HepG2 (cell line): ENCODE measurements at regions of chr6 and their contacts with region 1.

Region 1: DNA sequence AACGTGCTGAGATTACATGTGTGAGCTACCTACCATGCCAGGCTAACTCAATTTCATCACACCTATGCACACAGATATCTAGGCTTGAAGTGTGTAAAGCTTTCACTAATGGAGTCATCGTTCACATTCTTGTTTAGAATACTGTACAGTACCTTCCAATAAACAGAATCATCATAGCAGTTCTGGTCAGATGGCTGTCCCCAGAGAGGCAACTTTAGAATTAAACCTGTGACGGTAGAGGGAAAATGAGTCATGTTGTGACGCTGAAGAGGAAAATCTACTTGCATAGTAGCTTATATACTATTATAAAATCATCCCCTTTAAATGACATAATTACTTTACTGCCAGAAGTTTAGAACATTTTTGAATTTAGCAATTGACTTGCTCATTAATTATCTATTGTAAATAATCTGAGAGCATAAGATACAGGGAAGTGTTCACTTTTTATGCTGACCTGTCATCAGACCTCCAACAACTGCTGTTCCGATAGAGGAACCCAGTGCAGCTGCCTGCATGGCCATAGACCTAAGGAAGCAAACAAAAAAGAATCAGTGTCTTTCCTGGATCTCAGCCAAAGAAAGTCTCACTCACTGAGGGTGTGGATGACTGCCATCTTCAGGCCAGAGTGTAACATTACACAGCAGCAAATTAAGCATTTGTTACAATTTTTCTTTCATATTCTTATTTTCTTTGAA is 29.8 kb downstream of the RHAG start:
- DNase-seq: peak; percentile 91
- ATAC-seq: peak; percentile 88
- H3K4me3 ChIP-seq: no peak overlapping the region
- H3K27ac ChIP-seq: no peak overlapping the region
- H3K4me1 ChIP-seq: 0 out of 2 replicates have a peak, but pooled peaks cover 5% of the 10 kb centered on the region
- H3K27me3 ChIP-seq: 0 out of 5 replicates have a peak, but pooled peaks cover 0 to 5% of the 10 kb centered on the region in 2 experiments
- CTCF ChIP-seq: peak; percentile 94
- EP300 ChIP-seq: no peak
- POLR2A ChIP-seq: no peak
- RAD21 ChIP-seq: peak; percentile 71; the same call in 1 of the 2 replicates

Region 2: GRCh38 chr6:49453221-49453620 is 153.6 kb before region 1 on chr6:
- CTCF ChIA-PET with region 1: interaction called, 11 read pairs
- POLR2A ChIA-PET with region 1: no interaction called
- in situ Hi-C with region 1: loop called (anchors 5 kb)
- intact Hi-C with region 1: loop called (anchors 1 kb)
- DNase-seq: peak; percentile 6
- ATAC-seq: peak; percentile 60; the same call in 2 of the 3 replicates
- H3K4me3 ChIP-seq: no peak overlapping the region
- H3K27ac ChIP-seq: no peak overlapping the region
- H3K4me1 ChIP-seq: no peaks in the 10 kb centered on the region
- H3K27me3 ChIP-seq: no peaks in the 10 kb centered on the region
- CTCF ChIP-seq: peak; percentile 21; the same call in 1 of the 2 replicates
- EP300 ChIP-seq: no peak
- POLR2A ChIP-seq: no peak
- RAD21 ChIP-seq: no peak

Region 3: GRCh38 chr6:49531774-49532569 is 74.9 kb before region 1 on chr6:
- CTCF ChIA-PET with region 1: interaction called, 103 read pairs
- POLR2A ChIA-PET with region 1: no interaction called
- in situ Hi-C with region 1: loop called (anchors 5 kb)
- intact Hi-C with region 1: loop called (anchors 1 kb)
- DNase-seq: peak; percentile 72
- ATAC-seq: peak; percentile 98
- H3K4me3 ChIP-seq: peak overlapping the region; percentile 24 to 41 (median 40)
- H3K27ac ChIP-seq: no peak overlapping the region
- H3K4me1 ChIP-seq: peaks cover 16% of the 10 kb centered on the region
- H3K27me3 ChIP-seq: no peaks in the 10 kb centered on the region
- CTCF ChIP-seq: peak; percentile 83
- EP300 ChIP-seq: peak in 1 of 2 experiments; percentile 3; a peak in 1 of 4 replicates
- POLR2A ChIP-seq: no peak
- RAD21 ChIP-seq: peak; percentile 85

Region 4: DNA sequence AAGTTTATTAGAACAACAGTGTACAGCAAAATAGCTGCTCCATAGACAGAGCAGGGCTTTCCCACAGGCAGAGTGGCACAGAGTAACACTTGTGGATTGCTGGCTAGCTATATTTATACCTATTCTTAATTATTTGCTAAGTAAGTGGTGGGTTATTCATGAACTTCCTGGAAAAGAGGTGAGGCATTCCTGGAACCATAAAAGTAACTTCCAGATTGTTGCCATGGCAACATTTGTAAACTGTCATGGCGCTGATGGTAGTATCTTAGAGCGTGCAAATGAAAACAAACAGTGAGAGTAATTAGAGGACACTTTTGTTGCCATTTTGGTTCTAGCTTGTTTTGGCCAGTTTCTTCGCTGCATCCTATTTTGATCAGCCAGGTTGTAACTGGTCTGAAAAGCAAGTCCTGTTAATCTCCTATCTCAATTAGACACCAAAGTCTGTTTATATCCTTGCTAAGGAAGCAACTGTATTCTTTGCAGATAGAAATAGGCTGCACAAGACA is 333.2 kb after region 1 on chr6:
- CTCF ChIA-PET with region 1: no interaction called
- POLR2A ChIA-PET with region 1: no interaction called
- in situ Hi-C with region 1: no loop called
- intact Hi-C with region 1: no loop called
- DNase-seq: no peak
- ATAC-seq: no peak
- H3K4me3 ChIP-seq: no peak overlapping the region
- H3K27ac ChIP-seq: no peak overlapping the region
- H3K4me1 ChIP-seq: no peaks in the 10 kb centered on the region
- H3K27me3 ChIP-seq: no peaks in the 10 kb centered on the region
- CTCF ChIP-seq: no peak
- EP300 ChIP-seq: no peak
- POLR2A ChIP-seq: no peak
- RAD21 ChIP-seq: no peak